Naive thymus-derived CD4-positive, alpha-beta T cell (primary cell): ENCODE measurements at regions of chr19 and their contacts with region 1.

Region 1: DNA sequence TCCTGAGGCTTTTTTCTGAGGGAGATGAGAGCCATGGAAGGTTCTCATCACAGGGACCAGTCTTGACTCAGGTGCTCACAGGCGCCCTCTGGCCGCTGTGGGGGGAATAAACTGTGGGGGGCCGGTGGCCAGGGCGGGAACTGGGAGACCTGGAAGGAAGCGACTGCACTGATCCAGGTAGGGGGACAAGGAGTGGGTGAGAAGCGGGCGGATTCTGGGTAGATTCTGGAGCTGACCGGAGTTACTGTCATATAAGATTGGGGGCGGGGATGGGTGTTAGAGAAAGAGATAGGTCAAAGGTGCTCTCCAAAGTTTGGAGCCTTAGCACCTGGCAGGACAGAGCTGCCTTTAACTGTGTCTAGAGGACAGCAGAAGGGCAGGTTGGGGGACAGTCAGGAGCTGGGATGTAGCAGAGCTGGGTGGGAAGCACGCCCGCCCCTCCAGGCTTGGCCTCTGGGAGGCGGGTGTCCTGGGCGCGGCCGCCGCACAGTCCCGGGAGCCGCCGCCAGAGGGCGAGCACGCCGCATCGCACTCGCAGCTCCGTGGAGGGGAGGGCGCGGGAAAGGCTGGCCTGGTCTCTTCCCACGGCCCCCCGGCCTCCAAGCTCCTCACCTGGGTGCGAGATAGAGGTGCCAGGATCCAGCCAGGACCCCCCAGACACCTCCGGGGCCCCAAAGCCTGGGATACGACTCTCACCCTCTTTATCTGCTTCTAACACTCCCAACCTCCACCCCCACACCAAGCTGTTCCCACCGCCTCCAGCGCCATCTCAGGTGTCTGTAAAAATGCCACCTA is 4.2 kb upstream of the DAND5 start:
- DNase-seq: peak; percentile 57 to 91 (median 78)
- ATAC-seq: peak; percentile 98
- H3K4me3 ChIP-seq: peak overlapping the region; percentile 87
- H3K4me3 Mint-ChIP-seq: peak overlapping the region; percentile 78 to 92 (median 88)
- H3K27ac ChIP-seq: peak overlapping the region; percentile 21
- H3K27ac Mint-ChIP-seq: peak overlapping the region in 8 of 9 donors; percentile 10 to 86 (median 54)
- H3K4me1 ChIP-seq: peaks cover 3 to 9% of the 10 kb centered on the region in 2 donors
- H3K4me1 Mint-ChIP-seq: peaks cover 5 to 11% (median 7%) of the 10 kb centered on the region in 7 donors
- H3K27me3 ChIP-seq: no peaks in the 10 kb centered on the region
- H3K27me3 Mint-ChIP-seq: no peaks in the 10 kb centered on the region

Region 2: DNA sequence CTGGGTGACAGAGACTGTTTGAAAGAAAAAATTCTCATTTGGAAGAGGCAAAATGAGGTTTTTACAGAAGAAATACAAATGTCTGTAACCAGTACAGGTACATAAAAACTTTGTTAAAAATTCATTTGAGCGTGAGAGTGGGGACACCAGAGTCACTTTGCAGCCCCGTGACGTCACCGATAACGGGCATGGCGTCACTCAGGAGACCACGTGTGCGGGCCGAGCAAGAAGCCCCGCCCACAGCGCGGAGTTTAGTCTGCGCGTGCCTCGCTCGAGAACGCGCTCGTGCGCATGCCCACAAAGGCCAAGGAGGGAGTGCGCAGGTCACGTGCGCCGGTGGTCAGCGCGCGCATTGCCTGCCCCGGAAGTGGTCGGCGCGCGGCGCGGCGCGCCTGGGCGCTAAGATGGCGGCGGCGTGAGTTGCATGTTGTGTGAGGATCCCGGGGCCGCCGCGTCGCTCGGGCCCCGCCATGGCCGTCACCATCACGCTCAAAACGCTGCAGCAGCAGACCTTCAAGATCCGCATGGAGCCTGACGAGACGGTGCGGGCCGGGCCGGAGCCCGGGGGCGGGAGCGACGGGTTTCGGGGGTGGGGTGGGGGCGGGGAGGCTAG is 19.6 kb before region 1 on chr19 and contains the start of gene RAD23A:
- CTCF ChIA-PET with region 1: interaction called, 7 read pairs
- POLR2A ChIA-PET with region 1: interaction called, 3 read pairs
- intact Hi-C with region 1: loop called in 1 of 2 experiments (anchors 1 kb)
- DNase-seq: peak; percentile 96 to 99 (median 97)
- ATAC-seq: peak; percentile 94
- H3K4me3 ChIP-seq: peak within 1 kb of the TSS; percentile 67
- H3K4me3 Mint-ChIP-seq: peak within 1 kb of the TSS; percentile 88 to 97 (median 92)
- H3K27ac ChIP-seq: peak within 1 kb of the TSS; percentile 86
- H3K27ac Mint-ChIP-seq: peak within 1 kb of the TSS; percentile 93 to 99 (median 97)
- H3K4me1 ChIP-seq: peaks cover 21 to 26% of the 10 kb centered on the region in 2 donors
- H3K4me1 Mint-ChIP-seq: peaks cover 24 to 61% (median 46%) of the 10 kb centered on the region in 7 donors
- H3K27me3 ChIP-seq: no peaks in the 10 kb centered on the region
- H3K27me3 Mint-ChIP-seq: peaks cover 0 to 3% (median 0%) of the 10 kb centered on the region in 5 donors
- total RNA-seq, gene RAD23A: 75.0 to 111 (median 96.4) TPM

Region 3: GRCh38 chr19:13018035-13018914 is 53.1 kb after region 1 on chr19:
- CTCF ChIA-PET with region 1: no interaction called
- POLR2A ChIA-PET with region 1: no interaction called
- intact Hi-C with region 1: no loop called
- DNase-seq: no peak
- ATAC-seq: no peak
- H3K4me3 ChIP-seq: no peak overlapping the region
- H3K4me3 Mint-ChIP-seq: no peak overlapping the region
- H3K27ac ChIP-seq: no peak overlapping the region
- H3K27ac Mint-ChIP-seq: no peak overlapping the region
- H3K4me1 ChIP-seq: peaks cover 5 to 10% of the 10 kb centered on the region in 2 donors
- H3K4me1 Mint-ChIP-seq: peaks cover 9 to 29% (median 17%) of the 10 kb centered on the region in 7 donors
- H3K27me3 ChIP-seq: peaks cover 3 to 16% of the 10 kb centered on the region in 2 donors
- H3K27me3 Mint-ChIP-seq: peaks cover 26 to 74% (median 45%) of the 10 kb centered on the region in 5 donors